ENCODE measurements at regions of chr19 and their contacts with region 1.

Region 1: GRCh38 chr19:48489608-48490216 is 20.5 kb downstream of the CYTH2 start:
- DNase-seq: peak; percentile 86
- H3K4me3 Mint-ChIP-seq: no peak overlapping the region
- H3K27ac Mint-ChIP-seq: no peak overlapping the region
- H3K4me1 Mint-ChIP-seq: peaks cover 38% of the 10 kb centered on the region
- H3K27me3 Mint-ChIP-seq: peaks cover 61% of the 10 kb centered on the region

Region 2: DNA sequence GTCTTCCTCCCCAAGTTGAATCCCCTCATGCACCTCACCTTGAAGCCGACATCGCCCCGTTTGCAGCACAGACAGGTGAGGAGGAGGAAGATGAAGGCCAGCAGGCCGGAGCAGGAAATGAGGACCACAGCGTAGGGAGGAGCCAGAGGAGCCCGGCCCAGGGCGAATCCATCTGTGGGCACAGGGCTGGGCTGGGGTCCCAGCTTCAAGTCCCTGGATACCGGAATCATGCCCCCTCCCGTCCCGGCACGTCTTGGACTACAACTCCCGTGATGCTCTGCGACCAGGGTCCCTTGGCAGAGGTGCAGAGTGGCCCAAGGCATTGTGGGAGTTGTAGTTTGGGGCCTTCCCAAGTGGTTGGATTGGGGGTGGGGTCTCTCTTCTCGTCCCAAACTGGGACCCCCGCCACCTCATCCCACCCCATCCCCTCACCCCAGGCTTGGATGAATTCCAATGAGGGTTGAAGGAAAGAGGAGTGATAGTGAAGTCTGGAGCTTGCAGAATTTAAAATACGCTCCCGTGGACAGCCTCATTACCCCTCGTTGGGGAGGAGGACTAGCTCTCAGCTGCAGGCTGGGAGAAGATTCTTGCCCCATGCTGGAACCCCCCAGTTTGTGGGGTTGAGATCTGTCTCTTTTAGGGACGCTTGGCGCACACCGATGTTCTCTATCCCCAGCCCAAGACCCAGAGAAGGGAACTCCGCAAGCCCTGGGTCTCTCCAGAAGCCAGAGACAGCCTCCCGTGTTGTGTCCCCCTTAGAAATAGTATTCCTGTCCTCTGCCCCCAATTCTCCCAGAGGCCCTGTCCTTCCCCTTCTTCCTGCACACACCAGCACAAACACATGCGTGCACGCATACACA is 20.9 kb after region 1 on chr19:
- CTCF ChIA-PET with region 1: interaction called, 13 read pairs
- DNase-seq: peak; percentile 86
- H3K4me3 Mint-ChIP-seq: peak overlapping the region; percentile 77
- H3K27ac Mint-ChIP-seq: no peak overlapping the region
- H3K4me1 Mint-ChIP-seq: peaks cover 16% of the 10 kb centered on the region
- H3K27me3 Mint-ChIP-seq: peaks cover 14% of the 10 kb centered on the region

Region 3: DNA sequence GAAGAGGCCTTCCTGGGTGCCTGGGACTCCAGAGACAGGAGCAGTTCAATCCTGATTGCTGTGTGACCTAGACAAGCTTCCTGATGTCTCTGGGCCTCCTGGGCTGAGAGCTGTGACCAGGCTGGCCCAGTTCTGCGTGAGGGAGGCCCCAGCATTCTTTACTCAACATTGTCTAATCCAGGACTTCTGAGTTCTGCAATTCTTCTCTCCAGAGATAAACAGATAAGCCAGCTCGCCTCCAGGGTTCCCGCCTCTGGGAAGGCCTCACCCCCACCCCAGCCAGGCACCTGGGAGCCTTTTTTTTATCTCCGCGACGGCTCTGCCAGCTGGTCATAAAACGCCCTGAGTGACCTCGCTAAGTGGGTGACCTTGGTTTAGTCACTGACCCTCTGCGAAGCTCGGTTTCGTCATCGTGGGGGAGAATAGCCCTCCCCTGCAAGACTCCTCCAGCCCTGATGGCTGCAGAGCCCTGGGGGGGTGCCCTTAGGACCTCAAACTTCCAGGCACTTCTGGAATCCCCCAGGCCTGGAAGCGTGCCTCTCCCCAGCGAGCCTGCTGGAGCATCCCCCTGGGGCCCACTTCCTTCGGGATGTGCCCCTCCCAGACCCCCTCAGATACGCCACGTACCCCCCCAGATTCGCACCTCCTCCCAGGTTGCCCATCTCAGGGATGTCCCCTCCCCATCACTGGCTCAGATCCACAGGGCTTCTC is 64.1 kb after region 1 on chr19:
- CTCF ChIA-PET with region 1: no interaction called
- DNase-seq: no peak
- H3K4me3 Mint-ChIP-seq: no peak overlapping the region
- H3K27ac Mint-ChIP-seq: no peak overlapping the region
- H3K4me1 Mint-ChIP-seq: peaks cover 3% of the 10 kb centered on the region
- H3K27me3 Mint-ChIP-seq: peaks cover 25% of the 10 kb centered on the region

Measured in activated naive CD4-positive, alpha-beta T cell treated with anti-CD3 and anti-CD28 coated beads, Interleukin-2, amount 10 ng/mL, durations not matched to agents 7 days and 5 days (primary cell).